ENCODE measurements at regions of chr15 and their contacts with region 1.

Region 1: DNA sequence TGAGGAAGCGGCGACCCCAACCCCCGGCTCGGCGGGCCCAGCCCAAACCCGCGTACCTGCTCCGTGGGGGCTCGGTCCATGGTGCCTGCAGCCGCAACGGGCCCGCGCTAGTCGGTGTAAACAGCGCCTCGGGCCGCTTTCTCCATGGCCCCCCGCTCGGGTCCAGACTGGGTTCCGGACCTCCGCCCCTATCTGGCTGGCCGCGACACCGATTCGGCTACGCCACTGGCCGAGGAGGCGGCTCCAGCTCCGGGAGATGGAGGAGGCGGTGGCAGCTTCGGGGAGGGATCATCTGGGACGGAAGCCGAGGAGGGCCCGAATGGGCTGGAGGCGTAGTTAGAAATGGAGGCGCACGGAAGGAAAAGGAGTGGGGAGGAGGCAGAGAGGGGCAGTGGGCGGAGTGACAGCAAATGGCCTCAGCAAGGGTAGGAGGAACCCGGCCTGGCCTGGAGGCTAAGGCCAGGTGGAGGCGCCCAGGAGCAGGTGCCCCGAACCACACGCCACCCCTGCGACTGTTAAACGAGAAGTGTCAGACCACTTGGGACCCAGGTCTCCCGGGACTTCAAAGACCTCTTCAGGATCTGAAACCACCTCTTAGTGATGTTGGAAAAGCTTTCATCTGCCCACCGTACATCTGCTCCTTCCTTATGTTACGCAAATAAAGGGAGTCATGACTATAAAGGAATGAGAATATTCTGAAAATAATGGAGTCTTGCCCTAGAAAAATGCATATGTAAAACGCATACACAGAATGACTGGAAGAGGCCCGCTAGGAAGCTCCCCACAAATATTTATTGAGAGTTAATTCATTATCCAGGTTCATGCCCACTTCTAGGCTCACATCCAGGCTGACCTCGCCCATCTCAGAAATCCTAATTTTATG is at the start of gene SECISBP2L:
- DNase-seq: peak; percentile 79 to 95 (median 84)
- ATAC-seq: peak; percentile 95
- H3K4me3 ChIP-seq: peak within 1 kb of the TSS; percentile 66
- H3K4me3 Mint-ChIP-seq: peak within 1 kb of the TSS; percentile 98
- H3K27ac ChIP-seq: peak within 1 kb of the TSS; percentile 5 to 52
- H3K27ac Mint-ChIP-seq: peak within 1 kb of the TSS; percentile 92
- H3K4me1 ChIP-seq: peaks cover 11% of the 10 kb centered on the region
- H3K4me1 Mint-ChIP-seq: peaks cover 42% of the 10 kb centered on the region
- H3K27me3 ChIP-seq: no peaks in the 10 kb centered on the region
- H3K27me3 Mint-ChIP-seq: no peaks in the 10 kb centered on the region
- CTCF ChIP-seq: no peak
- total RNA-seq, gene SECISBP2L: 55.9 to 56.0 TPM

Region 2: GRCh38 chr15:48877630-48878595 is 168.5 kb before region 1 on chr15 and contains the start of gene EID1:
- CTCF ChIA-PET with region 1: interaction called, 4 read pairs
- POLR2A ChIA-PET with region 1: interaction called, 18 read pairs
- intact Hi-C with region 1: loop called (anchors 5 kb)
- DNase-seq: peak; percentile 84 to 98 (median 90)
- ATAC-seq: peak; percentile 93
- H3K4me3 ChIP-seq: peak within 1 kb of the TSS; percentile 92
- H3K4me3 Mint-ChIP-seq: peak within 1 kb of the TSS; percentile 94
- H3K27ac ChIP-seq: peak within 1 kb of the TSS; percentile 68 to 78
- H3K27ac Mint-ChIP-seq: peak within 1 kb of the TSS; percentile 95
- H3K4me1 ChIP-seq: peaks cover 7% of the 10 kb centered on the region
- H3K4me1 Mint-ChIP-seq: peaks cover 23% of the 10 kb centered on the region
- H3K27me3 ChIP-seq: no peaks in the 10 kb centered on the region
- H3K27me3 Mint-ChIP-seq: peaks cover 25% of the 10 kb centered on the region
- CTCF ChIP-seq: no peak
- total RNA-seq, gene EID1: 41.0 to 45.3 TPM

Region 3: DNA sequence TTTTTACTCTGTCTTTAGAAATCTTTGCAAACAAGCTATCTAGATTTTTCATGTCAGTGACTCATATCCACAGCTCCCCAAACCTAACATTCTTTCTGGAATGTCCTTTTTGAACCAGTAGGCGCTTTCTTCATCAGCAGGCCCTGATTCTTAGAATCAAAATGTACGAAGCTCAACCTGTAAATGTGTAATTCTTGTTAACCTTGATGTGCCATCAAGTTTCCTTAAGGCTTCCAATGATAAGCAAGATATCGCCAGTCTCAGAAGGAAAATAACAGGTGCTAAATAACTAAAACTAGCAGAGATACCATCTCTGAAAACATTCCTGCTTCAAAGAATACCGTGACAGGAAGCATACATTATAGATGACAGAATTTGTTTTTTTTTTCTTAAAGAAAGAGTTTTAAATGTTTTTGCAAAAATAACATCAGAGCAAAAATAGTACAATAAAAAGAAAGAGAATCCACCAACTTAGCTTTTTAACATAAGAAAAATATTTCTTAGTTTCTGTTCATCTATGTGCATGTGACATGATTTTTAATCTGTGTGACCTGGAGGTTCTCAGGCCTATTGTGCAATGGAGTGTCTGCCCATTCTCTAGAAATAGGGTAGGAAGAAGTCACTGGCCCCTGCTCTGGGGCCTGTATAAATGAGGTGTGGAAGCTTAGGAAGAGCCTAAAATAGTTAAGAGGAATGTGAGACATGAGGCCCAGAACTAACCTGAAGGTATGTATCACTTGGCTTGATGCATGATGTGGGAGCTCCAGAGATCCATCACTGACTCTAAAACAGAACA is 14.4 kb after region 1 on chr15:
- CTCF ChIA-PET with region 1: interaction called, 3 read pairs
- POLR2A ChIA-PET with region 1: interaction called, 13 read pairs
- intact Hi-C with region 1: no loop called
- DNase-seq: no peak
- ATAC-seq: no peak
- H3K4me3 ChIP-seq: no peak overlapping the region
- H3K4me3 Mint-ChIP-seq: peak overlapping the region; percentile 2
- H3K27ac ChIP-seq: peak overlapping the region in 1 of 2 donors; percentile 38
- H3K27ac Mint-ChIP-seq: peak overlapping the region; percentile 67
- H3K4me1 ChIP-seq: peaks cover 18% of the 10 kb centered on the region
- H3K4me1 Mint-ChIP-seq: peaks cover 14% of the 10 kb centered on the region
- H3K27me3 ChIP-seq: no peaks in the 10 kb centered on the region
- H3K27me3 Mint-ChIP-seq: no peaks in the 10 kb centered on the region
- CTCF ChIP-seq: no peak

Region 4: DNA sequence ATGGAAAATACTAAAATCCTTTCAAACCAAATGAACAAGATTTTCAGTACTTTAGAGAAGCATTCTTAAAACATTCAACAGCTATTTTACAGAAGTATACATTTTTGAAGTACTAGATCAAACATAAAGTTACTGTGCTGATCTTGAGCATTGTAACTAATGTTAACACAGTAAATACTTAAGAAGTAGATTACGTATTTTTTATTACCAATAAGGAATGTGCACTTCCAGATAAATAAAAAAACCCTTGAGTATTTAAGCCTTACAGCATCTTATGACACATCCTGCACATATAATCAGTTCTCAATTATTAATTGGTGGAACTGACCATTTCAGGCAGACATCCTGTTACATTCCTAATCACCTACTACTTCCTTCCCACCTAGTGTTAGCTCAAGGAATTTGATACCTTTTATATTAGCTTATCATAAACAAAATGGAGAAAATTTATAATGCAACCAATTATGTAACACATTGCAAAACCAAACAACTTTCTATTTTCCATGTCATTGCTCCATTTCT is 76.1 kb after region 1 on chr15:
- CTCF ChIA-PET with region 1: no interaction called
- POLR2A ChIA-PET with region 1: no interaction called
- intact Hi-C with region 1: loop called in 1 of 2 experiments (anchors 10 kb)
- DNase-seq: no peak
- ATAC-seq: no peak
- H3K4me3 ChIP-seq: no peak overlapping the region
- H3K4me3 Mint-ChIP-seq: no peak overlapping the region
- H3K27ac ChIP-seq: no peak overlapping the region
- H3K27ac Mint-ChIP-seq: no peak overlapping the region
- H3K4me1 ChIP-seq: no peaks in the 10 kb centered on the region
- H3K4me1 Mint-ChIP-seq: no peaks in the 10 kb centered on the region
- H3K27me3 ChIP-seq: no peaks in the 10 kb centered on the region
- H3K27me3 Mint-ChIP-seq: no peaks in the 10 kb centered on the region
- CTCF ChIP-seq: no peak